Adrenal gland (tissue), 19 donors: ENCODE measurements at regions of chr6 and their contacts with region 1.

Region 1: GRCh38 chr6:40308533-40309306 is 278.4 kb downstream of the LRFN2 start:
- DNase-seq: peak; percentile 53 to 79 (median 71)
- H3K4me3 ChIP-seq: no peak overlapping the region
- H3K27ac ChIP-seq: no peak overlapping the region
- H3K4me1 ChIP-seq: no peaks in the 10 kb centered on the region
- H3K27me3 ChIP-seq: peaks cover 8% of the 10 kb centered on the region
- CTCF ChIP-seq: peak; percentile 85 to 97 (median 93)
- POLR2A ChIP-seq: no peak

Region 2: GRCh38 chr6:39347906-39348585 is 960.7 kb before region 1 on chr6:
- intact Hi-C with region 1: loop called in 1 of 2 experiments (anchors 10 kb)
- DNase-seq: peak; percentile 64 to 91 (median 83)
- H3K4me3 ChIP-seq: no peak overlapping the region
- H3K27ac ChIP-seq: no peak overlapping the region
- H3K4me1 ChIP-seq: peaks cover 0 to 5% of the 10 kb centered on the region in 2 donors
- H3K27me3 ChIP-seq: no peaks in the 10 kb centered on the region
- CTCF ChIP-seq: peak; percentile 75 to 87 (median 86)
- POLR2A ChIP-seq: no peak

Region 3: GRCh38 chr6:39377539-39377950 is 931.2 kb before region 1 on chr6:
- intact Hi-C with region 1: loop called in 1 of 2 experiments (anchors 10 kb)
- DNase-seq: peak; percentile 70 to 82 (median 73)
- H3K4me3 ChIP-seq: no peak overlapping the region
- H3K27ac ChIP-seq: no peak overlapping the region
- H3K4me1 ChIP-seq: peaks cover 0 to 3% of the 10 kb centered on the region in 2 donors
- H3K27me3 ChIP-seq: no peaks in the 10 kb centered on the region
- CTCF ChIP-seq: peak; percentile 39 to 74 (median 64)
- POLR2A ChIP-seq: no peak

Region 4: DNA sequence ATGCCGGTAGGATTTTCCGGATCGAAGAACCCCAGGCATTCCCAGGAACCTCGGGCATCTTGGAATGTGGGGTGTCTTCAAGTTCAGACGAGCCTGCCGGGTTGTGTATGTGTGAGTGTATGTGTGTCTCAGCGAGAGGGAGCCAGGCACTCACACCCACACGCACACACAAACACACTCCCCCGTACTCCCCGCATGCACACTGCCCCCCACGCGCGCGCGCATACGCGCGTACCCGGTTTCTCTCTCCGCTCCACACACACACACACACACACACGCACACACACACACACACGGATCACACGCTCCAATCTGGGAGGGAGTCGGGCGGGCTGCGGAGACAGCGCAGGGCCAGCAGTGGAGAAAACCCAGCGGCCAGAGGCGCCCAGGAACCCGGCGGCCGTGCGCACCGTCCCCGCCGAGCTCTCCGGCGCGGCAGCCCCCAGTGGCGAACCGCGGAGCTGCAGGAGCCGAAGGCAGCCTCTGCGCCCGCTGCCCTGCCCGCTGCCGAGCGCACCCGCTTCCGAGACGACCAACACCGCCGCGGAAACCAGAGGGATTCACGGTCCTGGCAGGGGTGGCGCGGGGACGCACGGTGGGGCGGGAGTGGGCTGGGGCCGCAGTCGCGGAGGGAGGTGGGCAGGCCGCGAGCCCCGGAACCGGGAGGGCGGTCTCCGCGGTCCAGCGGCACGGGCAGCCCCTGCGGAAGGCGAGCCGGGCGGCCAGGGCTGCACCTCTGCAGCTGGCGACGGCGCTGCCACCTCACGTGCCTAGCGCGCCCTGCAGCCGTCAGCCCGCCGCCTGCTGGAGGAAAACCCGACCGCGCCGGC is 278.7 kb after region 1 on chr6 and contains the start of gene LRFN2:
- intact Hi-C with region 1: no loop called
- DNase-seq: peak; percentile 71 to 83 (median 78)
- H3K4me3 ChIP-seq: peak within 1 kb of the TSS in 2 of 4 donors; percentile 9 to 46
- H3K27ac ChIP-seq: peak within 1 kb of the TSS in 2 of 5 donors; percentile 21 to 38
- H3K4me1 ChIP-seq: peaks cover 0 to 15% of the 10 kb centered on the region in 2 donors
- H3K27me3 ChIP-seq: peaks cover 20% of the 10 kb centered on the region
- CTCF ChIP-seq: peak; percentile 27 to 85 (median 62)
- POLR2A ChIP-seq: no peak
- total RNA-seq, gene LRFN2: 0.07 to 0.74 (median 0.15) TPM in 6 of 9 donors, not detected in the others